Activated CD8-positive, alpha-beta T cell treated with anti-CD3 and anti-CD28 coated beads, Interleukin-2, amount 10 ng/mL, durations not matched to agents 7 days and 5 days (primary cell): ENCODE measurements at regions of chr2 and their contacts with region 1.

Region 1: DNA sequence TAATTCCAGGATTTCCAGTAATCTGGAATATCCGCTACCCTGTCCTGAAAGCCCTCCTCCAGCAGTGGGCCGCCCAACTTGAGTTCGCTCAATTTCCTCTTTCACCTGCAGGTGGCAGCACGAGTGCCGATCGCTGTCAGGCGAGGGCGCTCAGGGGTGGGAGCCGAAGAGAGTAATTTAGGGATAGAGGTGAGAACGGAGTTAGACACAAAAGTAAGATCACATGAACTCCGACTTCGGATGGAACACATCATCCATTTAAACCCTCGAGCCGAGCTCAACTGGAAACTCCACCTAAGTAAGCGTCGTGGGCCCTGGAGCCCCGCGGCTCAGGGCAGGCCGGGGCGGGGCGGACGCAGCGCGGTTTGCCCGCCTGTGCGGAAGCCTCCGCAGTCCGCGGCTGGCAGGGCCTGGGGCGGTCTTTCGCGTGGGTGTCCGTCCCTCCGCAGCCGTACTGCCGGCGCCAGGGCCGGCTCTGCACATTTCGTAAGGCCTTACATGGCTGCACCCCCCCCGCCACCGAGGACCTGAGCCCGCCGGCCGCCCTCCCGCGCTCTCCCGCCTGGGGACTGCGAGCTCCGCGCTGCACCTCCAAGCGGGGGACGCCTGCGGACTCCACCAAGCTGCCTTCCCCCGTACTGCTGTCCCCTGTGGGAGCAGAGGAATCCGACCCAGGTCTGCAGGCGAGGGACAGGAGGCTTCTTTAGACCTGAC is 61.2 kb downstream of the SEMA4F start:
- DNase-seq: peak; percentile 85
- ATAC-seq: peak; percentile 96
- H3K4me3 Mint-ChIP-seq: peak overlapping the region; percentile 75
- H3K27ac Mint-ChIP-seq: no peak overlapping the region
- H3K4me1 Mint-ChIP-seq: peaks cover 7% of the 10 kb centered on the region
- H3K27me3 Mint-ChIP-seq: peaks cover 21% of the 10 kb centered on the region

Region 2: GRCh38 chr2:74690571-74690970 is 24.7 kb before region 1 on chr2:
- CTCF ChIA-PET with region 1: interaction called, 11 read pairs
- POLR2A ChIA-PET with region 1: no interaction called
- DNase-seq: peak; percentile 50
- ATAC-seq: peak; percentile 61
- H3K4me3 Mint-ChIP-seq: no peak overlapping the region
- H3K27ac Mint-ChIP-seq: no peak overlapping the region
- H3K4me1 Mint-ChIP-seq: no peaks in the 10 kb centered on the region
- H3K27me3 Mint-ChIP-seq: peaks cover 11% of the 10 kb centered on the region

Region 3: GRCh38 chr2:74703373-74703772 is 11.9 kb before region 1 on chr2:
- CTCF ChIA-PET with region 1: interaction called, 27 read pairs
- POLR2A ChIA-PET with region 1: no interaction called
- DNase-seq: no peak
- ATAC-seq: no peak
- H3K4me3 Mint-ChIP-seq: no peak overlapping the region
- H3K27ac Mint-ChIP-seq: no peak overlapping the region
- H3K4me1 Mint-ChIP-seq: no peaks in the 10 kb centered on the region
- H3K27me3 Mint-ChIP-seq: peaks cover 27% of the 10 kb centered on the region

Region 4: DNA sequence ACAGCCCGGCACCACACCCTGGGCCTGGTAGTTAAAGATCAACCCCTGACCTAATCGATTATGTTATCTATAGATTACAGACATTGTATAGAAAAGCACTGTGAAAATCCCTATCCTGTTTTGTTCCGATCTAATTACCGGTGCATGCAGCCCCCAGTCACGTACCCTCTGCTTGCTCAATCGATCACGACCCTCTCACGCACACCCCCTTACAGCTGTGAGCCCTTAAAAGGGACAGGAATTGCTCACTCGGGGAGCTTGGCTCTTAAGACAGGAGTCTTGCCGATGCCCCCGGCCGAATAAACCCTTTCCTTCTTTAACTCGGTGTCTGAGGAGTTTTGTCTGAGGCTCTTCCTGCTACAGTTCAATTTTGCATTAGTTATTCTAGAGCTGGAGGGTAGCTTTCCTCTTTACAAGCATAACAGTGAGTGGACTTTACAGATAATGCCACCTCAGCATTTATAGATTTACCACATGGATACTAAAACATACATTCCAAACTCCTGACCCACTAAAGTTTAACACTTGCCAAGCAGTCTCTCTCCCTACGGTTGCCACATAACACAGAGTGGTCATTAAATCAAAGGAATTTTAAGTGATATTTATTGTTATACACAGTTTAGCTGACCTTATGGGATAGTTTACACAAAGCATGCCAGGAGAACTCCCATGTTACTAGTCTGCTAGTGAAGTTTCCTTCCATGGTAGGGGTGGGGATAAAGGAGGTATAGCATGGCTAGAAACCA is 744.5 kb after region 1 on chr2:
- CTCF ChIA-PET with region 1: no interaction called
- POLR2A ChIA-PET with region 1: no interaction called
- DNase-seq: no peak
- ATAC-seq: no peak
- H3K4me3 Mint-ChIP-seq: no peak overlapping the region
- H3K27ac Mint-ChIP-seq: no peak overlapping the region
- H3K4me1 Mint-ChIP-seq: no peaks in the 10 kb centered on the region
- H3K27me3 Mint-ChIP-seq: peaks cover 12% of the 10 kb centered on the region